A549 (cell line): ENCODE measurements at regions of chr9 and their contacts with region 1.

Region 1: GRCh38 chr9:113340017-113340699 is at the start of gene WDR31:
- DNase-seq: peak; percentile 91 to 93
- ATAC-seq: peak; percentile 99
- H3K4me3 ChIP-seq: peak within 1 kb of the TSS; percentile 51
- H3K27ac ChIP-seq: peak within 1 kb of the TSS; percentile 69 to 91
- H3K4me1 ChIP-seq: 0 out of 3 replicates have a peak, but pooled peaks cover 4% of the 10 kb centered on the region
- CTCF ChIP-seq: no peak
- EP300 ChIP-seq: no peak
- POLR2A ChIP-seq: peak; percentile 68
- RAD21 ChIP-seq: peak; percentile 10 to 14; a peak in 2 of 5 replicates
- polyA plus RNA-seq, gene WDR31: 2.9 and 3.7 TPM in 2 replicates

Region 2: GRCh38 chr9:113410207-113410864 is 70.2 kb after region 1 on chr9 and contains the starts of genes C9orf43 and POLE3:
- CTCF ChIA-PET with region 1: interaction called, 4 read pairs
- POLR2A ChIA-PET with region 1: interaction called, 17 read pairs
- DNase-seq: peak; percentile 90 to 97
- ATAC-seq: peak; percentile 97
- H3K4me3 ChIP-seq: peak within 1 kb of the TSS; percentile 70
- H3K27ac ChIP-seq: peak within 1 kb of the TSS; percentile 95 to 98
- H3K4me1 ChIP-seq: peaks cover 8% of the 10 kb centered on the region; the same call in 1 of the 3 replicates
- CTCF ChIP-seq: no peak
- EP300 ChIP-seq: no peak
- POLR2A ChIP-seq: peak; percentile 72
- RAD21 ChIP-seq: no peak
- polyA plus RNA-seq, gene C9orf43: 0.89 and 1.0 TPM in 2 replicates
- polyA plus RNA-seq, gene POLE3: 129 and 143 TPM in 2 replicates